ENCODE measurements at regions of chr17 and their contacts with region 1.

Region 1: GRCh38 chr17:12020642-12021622 is at the start of gene MAP2K4:
- DNase-seq: peak; percentile 58 to 94
- H3K4me3 ChIP-seq: peak within 1 kb of the TSS; percentile 90 to 99
- H3K27ac ChIP-seq: peak within 1 kb of the TSS; percentile 81 to 87
- H3K4me1 ChIP-seq: peaks cover 10 to 19% of the 10 kb centered on the region in 2 donors
- H3K27me3 ChIP-seq: no peaks in the 10 kb centered on the region
- CTCF ChIP-seq: no peak
- total RNA-seq, gene MAP2K4: 54.5 TPM

Region 2: DNA sequence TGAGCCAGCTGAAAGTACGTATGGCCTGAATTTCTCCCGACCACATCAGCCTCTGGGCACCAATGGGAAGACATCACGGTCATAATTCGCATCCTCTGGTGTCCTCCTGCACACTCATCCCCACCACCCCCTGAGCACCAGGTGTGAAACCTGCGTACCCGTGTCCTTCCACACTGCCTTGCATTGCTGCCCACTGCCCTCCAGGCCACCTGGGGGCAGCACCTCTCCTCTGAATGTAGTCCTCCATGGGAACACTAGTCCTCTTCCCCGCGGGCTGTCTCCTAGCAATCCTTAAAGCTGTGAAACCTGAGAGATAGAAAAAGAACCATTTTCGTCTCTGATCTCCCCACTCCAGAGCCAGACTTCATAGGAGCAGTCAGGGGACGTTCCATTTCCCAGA is 149.2 kb before region 1 on chr17:
- intact Hi-C with region 1: no loop called
- DNase-seq: no peak
- H3K4me3 ChIP-seq: no peak overlapping the region
- H3K27ac ChIP-seq: no peak overlapping the region
- H3K4me1 ChIP-seq: no peaks in the 10 kb centered on the region
- H3K27me3 ChIP-seq: no peaks in the 10 kb centered on the region
- CTCF ChIP-seq: no peak

Region 3: DNA sequence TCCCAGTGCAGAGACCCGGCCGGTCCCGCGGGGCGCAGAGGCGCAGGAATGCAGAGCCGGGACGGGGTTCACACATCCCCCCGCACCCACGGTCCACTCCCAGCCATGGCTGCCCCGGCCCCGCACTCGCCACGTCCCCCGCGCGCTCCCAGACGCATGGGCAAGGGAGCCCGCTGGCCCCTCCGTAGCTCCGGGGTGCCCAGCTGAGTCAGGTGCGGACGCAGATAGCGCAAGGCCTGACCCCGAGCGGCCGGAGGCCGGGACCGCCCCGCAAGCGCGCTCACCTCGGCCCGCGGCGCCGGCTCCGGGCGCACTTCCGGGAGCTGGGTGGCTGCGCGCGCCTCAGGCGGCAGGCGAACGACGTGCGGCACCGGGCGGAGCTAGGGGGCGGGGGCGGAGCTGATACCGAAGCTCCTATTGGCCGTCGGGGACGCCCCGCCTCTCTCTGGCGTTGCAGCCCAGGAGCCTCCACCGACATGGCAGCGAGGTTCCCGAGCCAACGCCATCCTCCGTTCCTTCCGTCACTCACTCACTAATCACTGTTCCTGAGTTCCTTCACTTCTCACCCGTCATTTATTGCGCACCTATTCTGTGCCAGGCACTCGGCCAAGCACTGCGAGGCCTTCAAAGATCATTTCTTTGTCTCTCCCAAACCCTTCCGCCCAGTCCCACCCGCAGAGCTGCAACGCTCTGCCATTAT is 23.6 kb before region 1 on chr17 and contains the start of gene ZNF18:
- intact Hi-C with region 1: loop called (anchors 1 kb)
- DNase-seq: peak; percentile 82 to 97
- H3K4me3 ChIP-seq: peak within 1 kb of the TSS; percentile 71 to 97
- H3K27ac ChIP-seq: peak within 1 kb of the TSS; percentile 87 to 88
- H3K4me1 ChIP-seq: peaks cover 0 to 8% of the 10 kb centered on the region in 2 donors
- H3K27me3 ChIP-seq: no peaks in the 10 kb centered on the region
- CTCF ChIP-seq: no peak
- total RNA-seq, gene ZNF18: 11.6 TPM

Region 4: GRCh38 chr17:12118617-12119016 is 97.7 kb after region 1 on chr17:
- intact Hi-C with region 1: loop called (anchors 5 kb)
- DNase-seq: no peak
- H3K4me3 ChIP-seq: no peak overlapping the region
- H3K27ac ChIP-seq: no peak overlapping the region
- H3K4me1 ChIP-seq: peaks cover 0 to 4% of the 10 kb centered on the region in 2 donors
- H3K27me3 ChIP-seq: no peaks in the 10 kb centered on the region
- CTCF ChIP-seq: no peak

Region 5: GRCh38 chr17:13017659-13018459 is 996.9 kb after region 1 on chr17 and contains the start of gene ELAC2:
- intact Hi-C with region 1: loop called (anchors 10 kb)
- DNase-seq: peak; percentile 93 to 99
- H3K4me3 ChIP-seq: peak within 1 kb of the TSS; percentile 98 to 99
- H3K27ac ChIP-seq: peak within 1 kb of the TSS; percentile 78 to 83
- H3K4me1 ChIP-seq: peaks cover 0 to 14% of the 10 kb centered on the region in 2 donors
- H3K27me3 ChIP-seq: no peaks in the 10 kb centered on the region
- CTCF ChIP-seq: peak in 1 of 3 experiments; percentile 16
- total RNA-seq, gene ELAC2: 190 TPM